ENCODE measurements at regions of chr5 and their contacts with region 1.

Region 1: GRCh38 chr5:153629027-153629895 is 138.8 kb downstream of the GRIA1 start:
- DNase-seq: peak; percentile 40 to 64
- H3K4me3 ChIP-seq: no peak overlapping the region
- H3K27ac ChIP-seq: no peak overlapping the region
- H3K4me1 ChIP-seq: peaks cover 8% of the 10 kb centered on the region; the same call in 1 of the 2 replicates
- H3K27me3 ChIP-seq: no peaks in the 10 kb centered on the region
- CTCF ChIP-seq: no peak

Region 2: DNA sequence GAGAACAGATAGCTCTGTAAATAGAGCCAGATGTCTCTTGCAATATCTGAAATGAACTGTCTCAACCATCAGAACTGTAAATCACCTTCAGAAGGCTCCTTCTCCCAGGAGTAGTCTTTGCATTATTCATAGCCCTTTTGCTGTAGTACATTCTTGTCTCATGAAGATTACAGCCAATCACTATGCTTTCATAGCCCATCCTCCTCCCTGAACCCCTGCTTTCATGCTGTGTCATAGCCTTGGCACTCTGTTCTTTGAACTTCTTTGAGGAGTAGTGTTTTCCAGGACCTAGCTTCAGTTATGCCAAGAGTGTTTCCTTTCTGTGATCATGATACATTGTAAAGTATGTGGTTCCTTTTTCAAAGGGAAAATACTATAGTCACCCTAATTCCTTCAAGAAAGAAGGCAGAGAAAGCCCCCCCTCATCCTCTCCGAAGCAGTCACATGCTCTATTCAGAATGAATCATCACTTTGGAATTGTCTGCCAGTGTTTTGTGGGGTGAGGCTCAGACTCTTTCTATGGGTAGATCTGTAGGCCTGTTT is 77.7 kb before region 1 on chr5:
- CTCF ChIA-PET with region 1: no interaction called
- POLR2A ChIA-PET with region 1: no interaction called
- intact Hi-C with region 1: loop called (anchors 1 kb)
- DNase-seq: peak in 1 of 2 experiments; percentile 51
- H3K4me3 ChIP-seq: no peak overlapping the region; the same call in 1 of the 2 replicates
- H3K27ac ChIP-seq: peak overlapping the region; percentile 48
- H3K4me1 ChIP-seq: peaks cover 14% of the 10 kb centered on the region
- H3K27me3 ChIP-seq: no peaks in the 10 kb centered on the region
- CTCF ChIP-seq: no peak

Region 3: DNA sequence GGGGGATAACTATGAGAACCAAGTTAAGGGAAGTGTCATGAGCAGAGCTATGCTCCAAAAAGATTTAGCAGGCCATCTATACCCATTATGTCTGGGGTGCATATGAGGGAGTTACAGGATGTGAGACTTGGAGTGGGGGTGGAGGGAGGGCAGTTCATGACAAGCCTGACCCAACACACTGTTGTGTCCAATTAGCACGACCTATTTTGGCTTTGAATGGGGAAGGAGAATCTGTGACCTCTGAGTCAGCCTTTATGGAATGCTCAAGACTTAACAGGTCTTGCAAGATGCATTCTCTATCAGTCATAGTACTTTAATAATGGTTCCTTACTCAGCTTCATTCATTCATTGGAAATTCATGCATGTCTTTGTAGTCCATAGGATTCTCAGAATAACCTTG is 67.1 kb before region 1 on chr5:
- CTCF ChIA-PET with region 1: no interaction called
- POLR2A ChIA-PET with region 1: no interaction called
- intact Hi-C with region 1: loop called (anchors 2 kb)
- DNase-seq: peak; percentile 53 to 65
- H3K4me3 ChIP-seq: no peak overlapping the region
- H3K27ac ChIP-seq: 0 out of 2 replicates have a peak overlapping the region, but pooled peaks have one; percentile 23
- H3K4me1 ChIP-seq: peaks cover 11% of the 10 kb centered on the region
- H3K27me3 ChIP-seq: no peaks in the 10 kb centered on the region
- CTCF ChIP-seq: no peak

Region 4: DNA sequence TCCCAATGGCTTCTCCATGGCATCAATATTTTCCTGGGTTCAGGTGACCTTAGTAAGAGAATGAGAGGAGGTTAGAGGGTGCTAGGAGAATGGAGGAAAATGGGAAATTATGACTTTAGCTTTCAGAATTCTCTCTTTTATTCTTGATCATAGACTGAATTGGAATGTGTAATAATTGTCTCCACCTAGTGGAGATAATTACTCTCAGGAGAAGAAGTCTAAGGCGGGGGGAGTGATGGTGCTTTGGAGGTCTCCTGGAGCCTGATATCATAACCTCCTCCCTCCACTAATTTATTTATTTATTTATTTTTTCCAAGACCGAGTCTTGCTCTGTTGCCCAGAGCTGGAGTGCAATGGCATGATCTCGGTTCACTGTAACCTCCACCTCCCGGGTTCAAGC is 82.5 kb after region 1 on chr5:
- CTCF ChIA-PET with region 1: no interaction called
- POLR2A ChIA-PET with region 1: no interaction called
- intact Hi-C with region 1: no loop called
- DNase-seq: no peak
- H3K4me3 ChIP-seq: no peak overlapping the region
- H3K27ac ChIP-seq: no peak overlapping the region
- H3K4me1 ChIP-seq: no peaks in the 10 kb centered on the region
- H3K27me3 ChIP-seq: no peaks in the 10 kb centered on the region
- CTCF ChIP-seq: no peak